A673 (cell line): ENCODE measurements at regions of chr15 and their contacts with region 1.

Region 1: DNA sequence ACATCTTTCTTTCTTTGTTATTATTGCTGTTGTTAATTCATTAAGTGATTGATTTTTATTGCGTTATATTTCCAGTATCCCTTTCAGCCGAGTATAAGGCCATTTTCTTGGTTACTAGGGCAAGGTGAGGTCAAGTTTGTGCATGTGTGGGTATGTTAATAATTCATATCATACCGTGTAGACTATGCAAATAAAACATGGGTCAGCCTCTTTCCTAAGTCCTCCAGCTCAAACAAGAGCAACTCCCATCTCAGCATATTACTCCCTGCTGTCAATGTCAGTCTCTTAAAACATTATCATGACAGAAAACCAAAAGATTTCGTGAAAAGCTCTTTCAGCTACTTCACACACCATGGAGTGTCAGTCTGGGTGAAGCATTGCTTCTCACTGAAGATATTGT is 103.9 kb upstream of the ST8SIA2 start:
- DNase-seq: no peak
- H3K4me3 ChIP-seq: no peak overlapping the region
- H3K27ac ChIP-seq: no peak overlapping the region
- H3K4me1 ChIP-seq: no peaks in the 10 kb centered on the region
- H3K27me3 ChIP-seq: no peaks in the 10 kb centered on the region
- CTCF ChIP-seq: no peak

Region 2: GRCh38 chr15:92226014-92226612 is 63.6 kb before region 1 on chr15:
- CTCF ChIA-PET with region 1: interaction called, 13 read pairs
- POLR2A ChIA-PET with region 1: no interaction called
- intact Hi-C with region 1: no loop called
- DNase-seq: peak; percentile 11
- H3K4me3 ChIP-seq: no peak overlapping the region
- H3K27ac ChIP-seq: no peak overlapping the region
- H3K4me1 ChIP-seq: no peaks in the 10 kb centered on the region
- H3K27me3 ChIP-seq: peaks cover 4% of the 10 kb centered on the region
- CTCF ChIP-seq: peak; percentile 52